GM10248 (cell line): ENCODE measurements at regions of chr2 and their contacts with region 1.

Region 1: DNA sequence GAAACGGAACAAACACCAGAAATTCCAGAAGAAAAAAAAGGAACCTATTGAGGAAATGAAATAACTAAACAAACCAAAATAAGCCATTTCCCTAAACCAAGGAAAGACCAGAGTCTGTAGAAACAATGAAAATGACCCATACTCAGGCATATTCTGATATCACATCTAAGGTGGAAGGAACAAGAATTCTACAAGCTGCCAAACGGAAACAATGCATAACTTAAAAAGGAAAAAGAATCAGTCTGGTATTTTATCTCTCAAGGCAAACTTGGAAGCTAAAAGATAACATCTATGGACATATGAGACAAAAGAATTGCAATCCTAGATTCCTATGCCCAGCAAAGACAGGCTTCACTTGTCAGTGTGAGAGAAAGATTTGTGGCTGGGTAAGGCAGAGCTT is 326.2 kb downstream of the PDE11A start:
- DNase-seq: no peak
- CTCF ChIP-seq: no peak

Region 2: DNA sequence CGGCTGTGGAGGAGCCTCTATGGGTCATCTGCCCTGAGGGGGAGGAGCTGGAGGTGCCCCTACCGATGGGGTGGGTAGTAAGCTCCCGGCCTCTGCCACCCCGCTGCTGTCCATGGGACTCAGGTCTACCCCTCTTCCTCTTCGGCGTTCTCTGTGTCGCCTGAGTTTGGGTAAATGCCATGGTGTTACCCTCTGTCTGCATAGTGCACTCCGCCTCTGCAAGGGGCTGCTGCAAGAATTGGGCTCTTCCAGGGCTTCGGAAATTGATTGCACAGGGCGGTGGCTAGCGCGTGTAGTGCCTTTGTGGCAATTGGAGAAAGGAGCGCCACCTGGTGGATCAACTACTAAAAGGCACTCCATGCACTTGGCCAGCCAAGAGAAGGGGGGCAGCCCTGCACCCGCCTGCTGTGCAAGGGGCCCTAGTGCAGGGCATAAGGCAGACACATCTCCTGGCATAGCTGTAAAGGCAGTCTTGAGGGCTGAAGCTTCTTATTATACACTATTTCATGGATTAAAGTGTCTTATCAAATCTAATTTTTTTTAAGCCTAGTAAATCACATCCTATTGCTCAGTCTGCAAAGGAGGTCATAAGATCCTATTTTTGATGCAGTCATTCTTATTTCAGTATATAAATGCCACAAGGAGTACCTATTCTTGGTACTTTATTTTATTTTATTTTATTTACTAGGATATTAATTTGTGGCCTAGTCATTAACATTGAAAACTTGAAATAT is 17.3 kb after region 1 on chr2:
- CTCF ChIA-PET with region 1: interaction called, 65 read pairs
- POLR2A ChIA-PET with region 1: no interaction called
- DNase-seq: peak; percentile 68
- CTCF ChIP-seq: peak; percentile 81